ENCODE measurements at regions of chr4 and their contacts with region 1.

Region 1: GRCh38 chr4:104930298-104930697 is 216.4 kb upstream of the TET2 start:
- DNase-seq: no peak
- ATAC-seq: no peak
- H3K4me3 Mint-ChIP-seq: no peak overlapping the region
- H3K27ac Mint-ChIP-seq: peak overlapping the region; percentile 88
- H3K4me1 Mint-ChIP-seq: peaks cover 54% of the 10 kb centered on the region
- H3K27me3 Mint-ChIP-seq: no peaks in the 10 kb centered on the region

Region 2: DNA sequence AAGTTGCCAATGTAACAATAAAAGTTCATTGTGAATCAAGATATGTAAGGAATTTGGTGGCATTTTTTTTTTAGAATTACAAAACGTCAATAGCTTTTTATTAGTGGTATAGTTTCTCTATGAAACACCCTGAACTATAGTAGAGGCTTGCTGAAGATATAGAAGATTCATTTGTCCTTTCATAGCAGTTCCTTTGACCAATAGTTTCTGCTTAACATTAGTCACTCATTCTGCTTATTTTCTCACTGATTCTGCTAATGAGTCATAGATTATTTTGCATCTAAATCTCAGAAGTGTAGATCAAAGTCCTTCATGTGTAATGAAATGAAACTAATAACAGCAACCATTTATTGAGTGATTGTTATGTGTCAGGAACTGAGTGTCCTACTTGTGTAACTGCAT is 11.4 kb after region 1 on chr4:
- CTCF ChIA-PET with region 1: interaction called, 15 read pairs
- POLR2A ChIA-PET with region 1: interaction called, 5 read pairs
- DNase-seq: no peak
- ATAC-seq: no peak
- H3K4me3 Mint-ChIP-seq: no peak overlapping the region
- H3K27ac Mint-ChIP-seq: no peak overlapping the region
- H3K4me1 Mint-ChIP-seq: peaks cover 51% of the 10 kb centered on the region
- H3K27me3 Mint-ChIP-seq: no peaks in the 10 kb centered on the region

Region 3: GRCh38 chr4:104966349-104967033 is 36.2 kb after region 1 on chr4:
- CTCF ChIA-PET with region 1: interaction called, 10 read pairs
- POLR2A ChIA-PET with region 1: no interaction called
- DNase-seq: peak; percentile 68
- ATAC-seq: peak; percentile 99
- H3K4me3 Mint-ChIP-seq: peak overlapping the region; percentile 67
- H3K27ac Mint-ChIP-seq: peak overlapping the region; percentile 94
- H3K4me1 Mint-ChIP-seq: peaks cover 23% of the 10 kb centered on the region
- H3K27me3 Mint-ChIP-seq: no peaks in the 10 kb centered on the region